Right ventricle myocardium superior (tissue), 1 donor: ENCODE measurements at regions of chr9 and their contacts with region 1.

Region 1: DNA sequence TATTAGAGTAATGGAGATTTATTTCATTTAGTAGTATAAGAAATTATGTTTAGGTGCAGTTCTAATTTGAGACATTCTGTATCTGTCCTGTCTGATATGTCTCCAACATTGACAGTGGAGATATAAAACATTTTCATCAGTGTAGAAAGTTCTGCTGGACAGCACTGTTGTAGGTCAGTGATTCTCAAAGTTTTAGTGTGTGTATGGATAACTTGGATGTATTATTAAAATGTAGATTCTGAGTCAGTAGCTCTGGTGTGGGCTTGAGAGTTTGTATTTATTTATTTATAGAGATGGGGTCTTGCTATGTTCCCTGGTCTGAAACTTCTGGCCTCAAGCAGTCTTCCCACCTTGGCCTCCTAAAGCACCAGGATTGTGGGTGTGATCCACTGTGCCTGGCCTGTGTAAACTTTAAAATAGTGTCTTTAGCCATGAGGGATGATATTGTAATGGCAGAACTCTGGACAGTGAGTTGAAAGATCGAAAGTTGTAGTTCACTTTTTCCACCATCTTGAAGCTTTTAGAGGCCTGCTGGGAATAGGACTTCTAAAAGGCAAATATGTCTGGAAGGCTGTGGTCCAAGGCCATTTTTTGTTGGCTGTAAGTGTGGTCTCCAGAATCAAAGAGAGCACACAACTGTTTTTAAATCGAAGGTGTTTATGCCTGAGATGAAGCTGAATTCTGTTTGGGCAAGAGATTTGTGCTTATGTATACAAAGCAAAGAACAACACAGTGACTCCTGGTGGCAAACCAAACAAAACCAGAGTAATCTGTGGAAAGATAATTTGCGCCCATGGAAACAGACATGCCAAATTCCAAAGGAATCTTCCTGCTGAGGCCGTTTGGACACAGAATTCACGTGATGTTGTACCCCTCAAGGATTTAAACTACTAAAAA is 12.4 kb downstream of the UBAP1 start:
- DNase-seq: no peak
- ATAC-seq: peak; percentile 10

Region 2: GRCh38 chr9:33942471-33943083 is 248.7 kb before region 1 on chr9:
- intact Hi-C with region 1: no loop called
- DNase-seq: no peak
- ATAC-seq: no peak

Region 3: GRCh38 chr9:34072868-34073590 is 118.2 kb before region 1 on chr9:
- intact Hi-C with region 1: no loop called
- DNase-seq: no peak
- ATAC-seq: peak; percentile 25

Region 4: DNA sequence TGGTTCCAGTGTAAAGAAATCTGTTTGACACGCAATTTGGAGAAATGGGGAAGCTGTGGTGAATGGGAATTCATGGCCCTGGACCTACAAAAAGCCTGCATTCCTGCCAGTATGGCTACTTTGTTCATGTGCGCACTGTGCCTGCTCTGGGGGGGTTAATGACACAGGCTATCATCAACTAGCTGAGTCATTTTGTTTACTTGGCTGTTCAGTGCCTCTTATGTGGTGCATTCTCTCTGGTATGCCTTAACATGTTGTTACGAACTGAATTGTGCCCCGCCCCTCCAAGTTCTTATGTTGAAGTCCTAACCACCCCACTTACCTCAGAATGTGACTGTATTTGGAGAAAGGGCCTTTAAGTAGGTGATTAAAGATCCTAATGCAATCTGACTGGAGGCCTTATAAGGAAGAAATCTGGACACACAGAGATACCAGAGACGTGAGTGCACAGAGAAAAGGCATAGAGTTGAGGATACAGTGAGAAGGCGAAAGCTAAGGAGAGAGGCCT is 32.8 kb before region 1 on chr9:
- intact Hi-C with region 1: no loop called
- DNase-seq: no peak
- ATAC-seq: no peak

Region 5: DNA sequence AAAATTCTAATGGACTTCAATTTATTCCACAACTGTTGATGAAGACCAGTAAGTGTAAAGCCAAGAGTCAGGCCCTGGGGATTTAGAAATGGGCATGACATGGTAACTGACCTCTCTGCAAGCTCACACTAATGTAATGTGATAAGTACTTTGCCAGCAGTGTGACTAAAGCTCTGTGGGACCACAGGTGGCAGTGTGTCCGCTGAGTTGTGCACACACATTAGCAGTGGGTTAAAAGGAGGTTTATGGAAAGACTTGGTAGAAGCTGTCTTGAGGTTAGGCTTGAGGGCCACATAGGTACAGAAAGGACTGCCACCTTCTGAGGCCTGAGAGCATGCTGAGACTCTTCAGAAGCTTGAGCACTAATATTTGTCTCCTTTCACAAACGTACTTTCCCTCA is 55.2 kb after region 1 on chr9:
- intact Hi-C with region 1: loop called (anchors 10 kb)
- DNase-seq: no peak
- ATAC-seq: no peak